MCF 10A (cell line): ENCODE measurements at regions of chr3 and their contacts with region 1.

Region 1: DNA sequence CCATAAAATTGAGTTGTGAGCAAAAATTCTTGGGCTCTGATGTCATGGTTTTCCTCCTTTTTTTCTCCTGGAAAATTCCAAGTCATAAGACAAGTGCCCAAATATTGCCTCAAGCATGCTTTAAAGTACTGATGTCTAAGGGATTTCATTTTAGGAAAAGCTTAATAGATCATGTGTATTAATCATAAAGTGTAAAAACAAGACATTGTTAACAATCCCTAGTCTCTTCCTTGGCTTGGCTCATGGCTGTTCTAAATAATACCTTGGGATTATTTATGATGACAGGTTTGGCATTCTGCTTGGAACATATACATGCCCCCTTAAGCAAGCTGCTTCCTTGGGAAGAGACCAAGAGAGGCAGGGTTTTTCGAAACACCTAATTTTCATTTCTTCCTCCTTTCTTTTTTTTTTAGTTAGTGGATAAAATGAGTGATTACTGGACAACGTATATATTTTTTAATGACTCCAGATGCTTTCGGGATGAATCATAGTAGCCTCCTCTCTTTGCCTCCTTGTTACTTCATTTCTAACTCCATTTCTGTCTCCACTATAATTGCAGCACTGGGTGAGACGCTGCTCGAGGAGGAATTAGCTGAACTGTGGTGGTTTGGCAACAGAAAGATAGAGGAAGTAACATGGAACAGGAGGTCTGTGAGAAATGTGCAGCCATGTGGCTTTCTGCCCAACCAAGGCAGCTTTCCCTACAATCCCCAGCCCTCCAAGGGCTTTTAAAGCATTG is 104.9 kb downstream of the TPRG1 start:
- DNase-seq: peak; percentile 95
- H3K4me3 Mint-ChIP-seq: peak overlapping the region; percentile 30
- H3K27ac Mint-ChIP-seq: peak overlapping the region; percentile 50
- H3K4me1 Mint-ChIP-seq: peaks cover 41% of the 10 kb centered on the region
- H3K27me3 Mint-ChIP-seq: no peaks in the 10 kb centered on the region
- CTCF ChIP-seq: no peak

Region 2: DNA sequence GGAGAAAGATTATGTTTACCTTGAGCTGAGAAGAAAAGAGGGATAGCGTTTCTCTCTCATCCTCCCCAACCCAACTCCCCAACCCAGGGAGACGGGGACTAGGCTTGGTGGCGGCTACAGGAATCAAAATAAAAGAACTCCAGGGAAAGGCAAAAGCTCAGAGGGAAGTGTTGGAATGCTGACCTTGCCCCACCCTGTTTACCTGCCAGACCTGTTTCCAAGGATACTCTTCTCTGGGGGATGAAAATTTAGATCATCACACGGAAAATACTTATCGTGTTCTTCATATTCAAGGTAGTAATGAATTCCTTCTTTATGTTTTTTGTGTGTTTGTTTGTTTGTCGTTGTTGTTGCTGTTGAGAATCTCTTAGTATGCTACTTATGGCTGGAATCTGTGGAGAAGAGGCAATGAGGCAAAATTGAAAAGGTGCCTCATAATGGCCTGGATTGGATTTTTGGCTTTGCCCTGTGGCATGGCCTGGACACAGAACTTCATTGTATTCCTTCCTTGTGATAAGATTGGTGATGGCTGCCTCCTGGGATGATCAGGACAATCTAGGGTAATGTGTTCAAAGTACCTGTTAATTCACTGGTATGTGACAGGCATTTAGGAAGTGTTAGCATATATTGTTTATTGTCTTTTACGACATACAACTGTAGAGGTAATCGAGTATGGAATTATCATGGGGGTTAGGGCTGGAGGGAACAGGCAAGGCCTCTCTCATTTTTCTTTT is 115.9 kb before region 1 on chr3:
- CTCF ChIA-PET with region 1: no interaction called
- POLR2A ChIA-PET with region 1: no interaction called
- intact Hi-C with region 1: no loop called
- DNase-seq: no peak
- H3K4me3 Mint-ChIP-seq: no peak overlapping the region
- H3K27ac Mint-ChIP-seq: no peak overlapping the region
- H3K4me1 Mint-ChIP-seq: no peaks in the 10 kb centered on the region
- H3K27me3 Mint-ChIP-seq: peaks cover 11% of the 10 kb centered on the region
- CTCF ChIP-seq: no peak

Region 3: DNA sequence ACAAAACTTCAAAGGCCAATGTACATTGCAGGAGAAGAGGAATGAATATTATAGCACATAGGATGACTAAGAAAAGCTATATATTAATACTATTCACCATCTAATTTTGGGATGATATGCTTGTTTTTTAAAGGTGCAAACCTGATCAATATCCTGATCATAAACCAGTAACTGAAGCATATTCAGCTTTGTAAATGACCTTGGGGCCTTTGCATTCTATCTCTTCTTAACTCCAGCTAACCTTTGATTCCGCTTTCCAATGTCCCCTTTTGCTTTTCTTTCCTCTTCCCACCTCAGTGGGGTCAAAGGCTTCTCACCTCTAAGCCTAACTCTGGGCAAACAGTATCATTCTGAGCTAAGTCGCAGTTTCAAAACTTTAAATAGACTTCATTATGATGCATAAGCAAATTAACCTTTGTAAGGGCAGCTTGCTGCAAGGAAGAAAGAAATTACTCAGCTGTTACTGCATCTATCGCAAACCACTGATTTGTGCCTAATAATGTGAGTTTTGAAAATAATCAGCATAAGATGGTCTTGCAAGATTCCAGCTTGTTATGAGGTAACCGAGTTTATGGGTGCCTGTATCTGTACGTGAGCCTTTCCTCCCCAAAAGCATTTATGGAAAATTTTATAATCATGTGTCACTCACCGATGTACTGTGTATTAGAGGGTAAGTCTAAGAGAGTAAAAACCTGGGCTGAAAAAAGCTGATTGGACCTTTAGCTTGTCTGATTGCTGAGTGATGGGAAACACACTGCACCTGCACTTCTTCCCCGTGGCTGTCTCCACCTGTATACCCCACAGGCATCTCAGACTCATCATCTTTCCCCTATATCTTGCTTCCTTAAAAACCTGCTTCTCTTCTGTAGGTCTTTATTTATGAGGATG is 11.9 kb after region 1 on chr3:
- CTCF ChIA-PET with region 1: interaction called, 7 read pairs
- POLR2A ChIA-PET with region 1: interaction called, 20 read pairs
- intact Hi-C with region 1: no loop called
- DNase-seq: no peak
- H3K4me3 Mint-ChIP-seq: no peak overlapping the region
- H3K27ac Mint-ChIP-seq: no peak overlapping the region
- H3K4me1 Mint-ChIP-seq: peaks cover 18% of the 10 kb centered on the region
- H3K27me3 Mint-ChIP-seq: no peaks in the 10 kb centered on the region
- CTCF ChIP-seq: no peak

Region 4: GRCh38 chr3:189324538-189325138 is 48.0 kb after region 1 on chr3:
- CTCF ChIA-PET with region 1: no interaction called
- POLR2A ChIA-PET with region 1: interaction called, 18 read pairs
- intact Hi-C with region 1: no loop called
- DNase-seq: peak; percentile 98
- H3K4me3 Mint-ChIP-seq: no peak overlapping the region
- H3K27ac Mint-ChIP-seq: peak overlapping the region; percentile 69
- H3K4me1 Mint-ChIP-seq: peaks cover 30% of the 10 kb centered on the region
- H3K27me3 Mint-ChIP-seq: no peaks in the 10 kb centered on the region
- CTCF ChIP-seq: no peak

Region 5: GRCh38 chr3:189563866-189564563 is 287.4 kb after region 1 on chr3:
- CTCF ChIA-PET with region 1: interaction called, 5 read pairs
- POLR2A ChIA-PET with region 1: interaction called, 12 read pairs
- intact Hi-C with region 1: no loop called
- DNase-seq: peak; percentile 92
- H3K4me3 Mint-ChIP-seq: no peak overlapping the region
- H3K27ac Mint-ChIP-seq: peak overlapping the region; percentile 69
- H3K4me1 Mint-ChIP-seq: peaks cover 26% of the 10 kb centered on the region
- H3K27me3 Mint-ChIP-seq: no peaks in the 10 kb centered on the region
- CTCF ChIP-seq: no peak

Region 6: GRCh38 chr3:189685854-189686253 is 409.2 kb after region 1 on chr3:
- CTCF ChIA-PET with region 1: no interaction called
- POLR2A ChIA-PET with region 1: no interaction called
- intact Hi-C with region 1: no loop called
- DNase-seq: peak; percentile 34
- H3K4me3 Mint-ChIP-seq: no peak overlapping the region
- H3K27ac Mint-ChIP-seq: peak overlapping the region; percentile 47
- H3K4me1 Mint-ChIP-seq: peaks cover 10% of the 10 kb centered on the region
- H3K27me3 Mint-ChIP-seq: no peaks in the 10 kb centered on the region
- CTCF ChIP-seq: no peak

Region 7: DNA sequence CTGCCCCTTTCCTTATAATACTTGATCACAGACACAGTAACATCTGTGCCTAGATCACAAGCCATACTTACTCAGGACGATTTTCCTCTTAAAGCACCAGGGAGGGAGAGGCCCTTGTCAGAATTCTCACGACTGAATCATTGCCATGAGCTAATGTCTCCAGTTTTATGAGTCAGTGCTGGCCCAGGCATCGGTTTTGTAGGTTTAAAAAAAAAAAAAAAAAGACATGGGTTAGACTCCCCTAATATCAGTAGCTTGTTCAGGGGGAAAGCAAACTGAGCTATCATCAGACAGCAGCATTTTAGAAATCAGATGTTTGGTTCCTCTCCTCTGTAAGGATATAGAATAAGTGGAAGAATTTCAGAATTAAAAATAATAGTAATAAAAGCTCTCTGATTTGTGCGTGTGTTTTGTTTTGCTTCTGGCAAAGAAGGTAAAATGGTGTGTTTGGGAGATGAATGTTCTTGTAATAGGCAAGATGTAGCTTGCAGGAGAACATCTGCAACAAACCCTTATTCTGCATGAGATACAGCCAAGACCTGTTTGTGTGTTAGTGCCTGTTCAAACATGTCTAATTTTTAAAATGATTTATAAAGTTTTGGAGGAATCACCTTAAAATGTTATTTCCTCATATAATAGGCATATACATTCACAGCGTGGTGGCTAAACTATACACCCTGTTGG is 548.1 kb after region 1 on chr3:
- CTCF ChIA-PET with region 1: interaction called, 4 read pairs
- POLR2A ChIA-PET with region 1: interaction called, 16 read pairs
- intact Hi-C with region 1: no loop called
- DNase-seq: peak; percentile 96
- H3K4me3 Mint-ChIP-seq: peak overlapping the region; percentile 42
- H3K27ac Mint-ChIP-seq: peak overlapping the region; percentile 83
- H3K4me1 Mint-ChIP-seq: peaks cover 31% of the 10 kb centered on the region
- H3K27me3 Mint-ChIP-seq: no peaks in the 10 kb centered on the region
- CTCF ChIP-seq: no peak